Ovary (tissue), 10 donors: ENCODE measurements at regions of chr14 and their contacts with region 1.

Region 1: GRCh38 chr14:71932220-71932981 is at the start of gene RGS6:
- DNase-seq: peak in 1 of 5 donors; percentile 15
- H3K4me3 ChIP-seq: peak within 1 kb of the TSS; percentile 23
- H3K27ac ChIP-seq: no peak within 1 kb of the TSS
- H3K4me1 ChIP-seq: no peaks in the 10 kb centered on the region
- H3K27me3 ChIP-seq: no peaks in the 10 kb centered on the region
- CTCF ChIP-seq: no peak
- EP300 ChIP-seq: no peak
- POLR2A ChIP-seq: no peak
- total RNA-seq, gene RGS6: 0.53 to 6.9 (median 1.1) TPM

Region 2: DNA sequence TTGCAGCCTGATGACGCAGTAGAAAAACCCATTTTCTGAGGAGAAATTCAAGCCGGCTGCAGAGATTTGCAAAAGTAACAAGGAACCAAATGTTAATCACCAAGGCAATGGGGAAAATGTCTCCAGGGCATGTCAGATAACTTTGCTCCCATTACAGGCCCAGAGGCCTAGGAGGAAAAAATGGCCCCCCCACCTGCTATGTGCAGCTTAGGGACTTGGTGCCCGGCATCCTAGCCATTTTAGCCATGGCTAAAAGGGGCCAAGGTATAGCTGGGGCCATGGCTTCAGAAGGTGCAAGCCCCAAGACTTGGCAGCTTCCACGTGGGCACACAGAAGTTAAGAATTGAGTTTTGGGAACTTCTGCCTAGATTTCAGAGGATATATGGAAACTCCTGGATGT is 351.8 kb after region 1 on chr14:
- intact Hi-C with region 1: loop called in 1 of 4 experiments (anchors 10 kb)
- DNase-seq: no peak
- H3K4me3 ChIP-seq: no peak overlapping the region
- H3K27ac ChIP-seq: no peak overlapping the region
- H3K4me1 ChIP-seq: no peaks in the 10 kb centered on the region
- H3K27me3 ChIP-seq: no peaks in the 10 kb centered on the region
- CTCF ChIP-seq: no peak
- EP300 ChIP-seq: no peak
- POLR2A ChIP-seq: no peak

Region 3: GRCh38 chr14:72420725-72421474 is 488.5 kb after region 1 on chr14:
- intact Hi-C with region 1: loop called in 1 of 4 experiments (anchors 10 kb)
- DNase-seq: peak; percentile 64 to 92 (median 83)
- H3K4me3 ChIP-seq: no peak overlapping the region
- H3K27ac ChIP-seq: no peak overlapping the region
- H3K4me1 ChIP-seq: peaks cover 2% of the 10 kb centered on the region
- H3K27me3 ChIP-seq: no peaks in the 10 kb centered on the region
- CTCF ChIP-seq: peak; percentile 47 to 77 (median 72)
- EP300 ChIP-seq: no peak
- POLR2A ChIP-seq: no peak